ENCODE measurements at regions of chr3 and their contacts with region 1.

Region 1: GRCh38 chr3:48507351-48508061 is 3.5 kb upstream of the SHISA5 start:
- DNase-seq: peak; percentile 75 to 84 (median 77)
- H3K4me3 ChIP-seq: no peak overlapping the region
- H3K4me3 Mint-ChIP-seq: peak overlapping the region in 7 of 8 donors; percentile 42 to 77 (median 64)
- H3K27ac ChIP-seq: peak overlapping the region; percentile 27
- H3K27ac Mint-ChIP-seq: peak overlapping the region; percentile 83 to 92 (median 86)
- H3K4me1 ChIP-seq: peaks cover 62% of the 10 kb centered on the region
- H3K4me1 Mint-ChIP-seq: peaks cover 36 to 62% (median 50%) of the 10 kb centered on the region in 4 donors
- H3K27me3 ChIP-seq: no peaks in the 10 kb centered on the region
- H3K27me3 Mint-ChIP-seq: no peaks in the 10 kb centered on the region

Region 2: DNA sequence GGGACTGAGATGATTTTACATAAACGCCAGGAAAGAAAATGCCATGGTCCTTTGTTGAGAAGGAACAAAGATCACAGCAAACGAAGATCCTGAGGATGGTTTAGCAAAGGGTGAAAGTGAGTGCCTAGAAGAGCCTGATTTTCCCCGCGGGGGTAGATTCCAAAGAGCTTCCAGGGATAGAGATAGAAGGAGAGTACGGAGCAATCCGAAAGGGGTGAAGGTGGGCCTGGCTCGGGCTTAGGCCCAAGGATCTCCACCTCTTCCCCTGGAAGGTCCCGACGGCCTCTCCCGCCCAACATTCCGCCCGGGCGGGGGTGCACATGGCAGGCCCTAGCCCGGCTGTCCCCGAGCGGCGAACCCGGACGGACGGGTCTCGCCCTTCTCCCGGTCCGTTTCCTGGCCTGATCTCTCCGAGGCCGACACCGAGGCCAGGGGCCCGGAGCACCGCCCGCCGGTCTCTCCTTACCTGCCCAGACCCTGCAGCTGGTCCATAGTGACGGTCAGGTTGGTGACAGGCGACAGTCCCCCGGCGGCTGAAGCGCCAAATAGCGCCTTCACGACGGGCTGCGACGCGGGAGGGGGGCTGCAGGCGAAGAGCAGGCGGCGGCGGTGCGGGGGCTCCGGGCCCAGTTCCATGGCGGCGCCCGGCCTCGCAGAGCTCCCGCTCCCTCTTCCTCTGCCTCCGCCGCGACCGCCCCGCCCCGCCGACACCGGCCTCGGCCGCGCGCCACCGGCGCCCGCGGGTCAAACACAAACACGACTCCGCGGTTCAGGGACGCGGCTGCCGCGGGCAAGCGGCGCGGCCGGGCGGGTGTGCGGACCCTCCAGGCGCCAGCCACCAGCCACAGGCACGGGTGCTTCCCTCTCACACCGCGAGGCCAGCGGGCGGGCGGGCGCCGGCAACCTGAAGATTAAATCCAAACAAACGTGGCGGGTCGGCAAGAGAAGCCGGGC is 319.9 kb before region 1 on chr3:
- CTCF ChIA-PET with region 1: no interaction called
- POLR2A ChIA-PET with region 1: no interaction called
- intact Hi-C with region 1: no loop called
- DNase-seq: peak in 2 of 5 donors; percentile 2 to 38
- H3K4me3 ChIP-seq: peak overlapping the region in 1 of 2 donors; percentile 95
- H3K4me3 Mint-ChIP-seq: peak overlapping the region; percentile 92 to 96 (median 95)
- H3K27ac ChIP-seq: peak overlapping the region; percentile 26
- H3K27ac Mint-ChIP-seq: peak overlapping the region in 5 of 7 donors; percentile 1 to 90 (median 75)
- H3K4me1 ChIP-seq: peaks cover 12% of the 10 kb centered on the region
- H3K4me1 Mint-ChIP-seq: peaks cover 8 to 23% (median 15%) of the 10 kb centered on the region in 4 donors
- H3K27me3 ChIP-seq: no peaks in the 10 kb centered on the region
- H3K27me3 Mint-ChIP-seq: peaks cover 3 to 11% of the 10 kb centered on the region in 2 donors

Region 3: GRCh38 chr3:48446425-48447193 is 60.9 kb before region 1 on chr3 and contains the start of gene ATRIP:
- CTCF ChIA-PET with region 1: interaction called, 41 read pairs
- POLR2A ChIA-PET with region 1: interaction called, 13 read pairs
- intact Hi-C with region 1: no loop called
- DNase-seq: peak; percentile 79 to 86 (median 82)
- H3K4me3 ChIP-seq: peak within 1 kb of the TSS; percentile 76 to 84
- H3K4me3 Mint-ChIP-seq: peak within 1 kb of the TSS; percentile 83 to 96 (median 90)
- H3K27ac ChIP-seq: peak within 1 kb of the TSS; percentile 68
- H3K27ac Mint-ChIP-seq: peak within 1 kb of the TSS; percentile 91 to 97 (median 96)
- H3K4me1 ChIP-seq: peaks cover 30% of the 10 kb centered on the region
- H3K4me1 Mint-ChIP-seq: peaks cover 22 to 49% (median 37%) of the 10 kb centered on the region in 4 donors
- H3K27me3 ChIP-seq: no peaks in the 10 kb centered on the region
- H3K27me3 Mint-ChIP-seq: no peaks in the 10 kb centered on the region
- total RNA-seq, gene ATRIP: 14.9 to 15.2 TPM

Region 4: GRCh38 chr3:48465531-48466378 is 41.8 kb before region 1 on chr3:
- CTCF ChIA-PET with region 1: interaction called, 31 read pairs
- POLR2A ChIA-PET with region 1: interaction called, 30 read pairs
- intact Hi-C with region 1: loop called (anchors 1 kb)
- DNase-seq: peak; percentile 78 to 83 (median 79)
- H3K4me3 ChIP-seq: peak overlapping the region; percentile 69 to 94
- H3K4me3 Mint-ChIP-seq: peak overlapping the region; percentile 87 to 94 (median 90)
- H3K27ac ChIP-seq: peak overlapping the region; percentile 86
- H3K27ac Mint-ChIP-seq: peak overlapping the region; percentile 92 to 98 (median 96)
- H3K4me1 ChIP-seq: peaks cover 55% of the 10 kb centered on the region
- H3K4me1 Mint-ChIP-seq: peaks cover 30 to 58% (median 49%) of the 10 kb centered on the region in 4 donors
- H3K27me3 ChIP-seq: no peaks in the 10 kb centered on the region
- H3K27me3 Mint-ChIP-seq: no peaks in the 10 kb centered on the region

Region 5: GRCh38 chr3:48478596-48479555 is 28.6 kb before region 1 on chr3:
- CTCF ChIA-PET with region 1: interaction called, 32 read pairs
- POLR2A ChIA-PET with region 1: interaction called, 47 read pairs
- intact Hi-C with region 1: loop called (anchors 1 kb)
- DNase-seq: peak; percentile 81 to 89 (median 85)
- H3K4me3 ChIP-seq: peak overlapping the region; percentile 71 to 80
- H3K4me3 Mint-ChIP-seq: peak overlapping the region; percentile 89 to 97 (median 90)
- H3K27ac ChIP-seq: peak overlapping the region; percentile 59
- H3K27ac Mint-ChIP-seq: peak overlapping the region; percentile 89 to 99 (median 98)
- H3K4me1 ChIP-seq: peaks cover 58% of the 10 kb centered on the region
- H3K4me1 Mint-ChIP-seq: peaks cover 31 to 59% (median 40%) of the 10 kb centered on the region in 4 donors
- H3K27me3 ChIP-seq: no peaks in the 10 kb centered on the region
- H3K27me3 Mint-ChIP-seq: no peaks in the 10 kb centered on the region

Region 6: GRCh38 chr3:48565591-48566400 is 58.3 kb after region 1 on chr3:
- CTCF ChIA-PET with region 1: no interaction called
- POLR2A ChIA-PET with region 1: no interaction called
- intact Hi-C with region 1: no loop called
- DNase-seq: no peak
- H3K4me3 ChIP-seq: no peak overlapping the region
- H3K4me3 Mint-ChIP-seq: no peak overlapping the region
- H3K27ac ChIP-seq: no peak overlapping the region
- H3K27ac Mint-ChIP-seq: peak overlapping the region in 3 of 7 donors; percentile 5 to 82 (median 58)
- H3K4me1 ChIP-seq: no peaks in the 10 kb centered on the region
- H3K4me1 Mint-ChIP-seq: peaks cover 0 to 12% (median 0%) of the 10 kb centered on the region in 4 donors
- H3K27me3 ChIP-seq: no peaks in the 10 kb centered on the region
- H3K27me3 Mint-ChIP-seq: no peaks in the 10 kb centered on the region

Region 7: GRCh38 chr3:48588230-48588629 is 80.7 kb after region 1 on chr3:
- CTCF ChIA-PET with region 1: no interaction called
- POLR2A ChIA-PET with region 1: no interaction called
- intact Hi-C with region 1: no loop called
- DNase-seq: no peak
- H3K4me3 ChIP-seq: no peak overlapping the region
- H3K4me3 Mint-ChIP-seq: no peak overlapping the region
- H3K27ac ChIP-seq: no peak overlapping the region
- H3K27ac Mint-ChIP-seq: no peak overlapping the region
- H3K4me1 ChIP-seq: no peaks in the 10 kb centered on the region
- H3K4me1 Mint-ChIP-seq: no peaks in the 10 kb centered on the region
- H3K27me3 ChIP-seq: no peaks in the 10 kb centered on the region
- H3K27me3 Mint-ChIP-seq: peaks cover 15 to 31% of the 10 kb centered on the region in 2 donors

Measured in CD4-positive, alpha-beta memory T cell (primary cell).